Activated CD4-positive, alpha-beta memory T cell treated with anti-CD3 and anti-CD28 coated beads for 36 hours (primary cell): ENCODE measurements at regions of chr6 and their contacts with region 1.

Region 1: DNA sequence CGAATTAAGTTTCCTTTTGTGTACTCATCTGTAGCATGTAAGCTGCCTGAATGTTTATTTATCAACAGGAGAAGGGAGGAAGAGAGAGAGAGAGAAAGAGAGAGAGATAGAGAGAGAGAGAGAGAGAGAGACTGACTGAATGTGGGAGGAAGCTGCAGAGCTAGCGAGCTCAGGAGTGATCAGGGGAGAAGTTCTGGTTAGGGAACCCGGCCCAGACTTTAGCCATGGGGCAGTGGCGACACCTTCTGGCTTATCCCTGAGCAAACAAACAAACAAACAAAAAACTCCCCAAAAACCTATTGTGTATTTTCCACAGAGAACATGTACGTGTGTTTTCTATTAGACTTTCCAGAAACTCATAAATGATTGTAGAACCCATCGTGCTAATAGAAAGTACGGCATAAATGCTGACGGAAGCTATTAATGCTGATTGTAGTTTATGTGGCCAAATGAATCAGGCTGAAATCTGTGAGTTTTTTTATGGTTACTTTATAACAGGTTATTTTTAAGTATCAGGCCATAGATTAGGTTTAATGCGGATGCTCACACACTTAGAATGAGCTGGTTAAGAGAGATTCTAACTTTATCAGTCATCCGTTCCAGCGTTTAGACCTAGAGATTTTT is 92.8 kb downstream of the CLIC5 start:
- DNase-seq: peak; percentile 83
- H3K4me3 Mint-ChIP-seq: peak overlapping the region; percentile 67
- H3K27ac Mint-ChIP-seq: peak overlapping the region; percentile 97
- H3K4me1 Mint-ChIP-seq: peaks cover 52% of the 10 kb centered on the region
- H3K27me3 Mint-ChIP-seq: no peaks in the 10 kb centered on the region

Region 2: DNA sequence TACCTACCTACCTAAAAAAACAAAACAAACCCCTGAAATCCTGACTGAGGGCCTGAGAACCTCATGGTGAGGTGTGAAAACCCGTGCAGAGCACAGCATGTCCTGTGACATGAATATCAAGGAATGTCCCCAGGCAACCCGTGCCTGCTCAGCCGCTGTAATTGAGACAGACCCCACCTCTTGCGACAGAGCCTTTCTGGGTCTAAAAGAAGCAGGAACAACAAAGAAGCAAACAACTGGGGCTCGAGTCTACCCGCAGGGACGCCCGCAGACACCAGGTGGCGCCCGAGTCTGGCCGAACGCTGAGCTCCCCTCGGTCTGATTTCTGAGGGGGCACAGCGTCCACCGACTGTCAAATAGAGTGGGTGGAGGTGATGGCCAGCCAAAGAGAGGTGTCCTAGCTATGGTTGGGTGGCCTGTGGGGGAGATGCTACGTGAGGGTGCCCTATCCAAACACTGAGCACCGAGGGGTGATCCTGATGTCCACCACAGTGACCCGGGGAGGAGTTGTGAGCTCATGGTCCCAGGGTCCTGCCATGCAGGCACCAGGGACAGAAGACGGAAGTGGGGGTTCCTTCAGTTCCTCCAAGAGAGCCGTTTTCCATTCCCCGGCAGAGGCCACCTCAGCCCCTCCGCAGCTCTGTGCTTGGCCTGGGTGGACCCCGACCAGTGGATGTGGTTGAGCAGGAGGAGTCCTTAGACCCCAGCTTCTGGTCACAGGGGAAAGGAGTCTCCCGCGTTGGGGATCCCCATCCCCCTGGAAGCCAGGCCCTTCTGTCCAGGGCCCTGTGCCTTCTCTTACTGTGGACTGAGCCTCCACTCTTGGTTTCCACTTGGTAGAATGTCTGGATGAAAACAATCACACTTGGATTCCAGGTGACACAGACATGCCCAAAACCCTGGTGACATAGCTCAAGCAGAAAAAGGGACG is 1267.2 kb before region 1 on chr6:
- CTCF ChIA-PET with region 1: interaction called, 31 read pairs
- POLR2A ChIA-PET with region 1: no interaction called
- intact Hi-C with region 1: loop called (anchors 1 kb)
- DNase-seq: peak; percentile 85
- H3K4me3 Mint-ChIP-seq: peak overlapping the region; percentile 24
- H3K27ac Mint-ChIP-seq: peak overlapping the region; percentile 76
- H3K4me1 Mint-ChIP-seq: peaks cover 9% of the 10 kb centered on the region
- H3K27me3 Mint-ChIP-seq: no peaks in the 10 kb centered on the region

Region 3: DNA sequence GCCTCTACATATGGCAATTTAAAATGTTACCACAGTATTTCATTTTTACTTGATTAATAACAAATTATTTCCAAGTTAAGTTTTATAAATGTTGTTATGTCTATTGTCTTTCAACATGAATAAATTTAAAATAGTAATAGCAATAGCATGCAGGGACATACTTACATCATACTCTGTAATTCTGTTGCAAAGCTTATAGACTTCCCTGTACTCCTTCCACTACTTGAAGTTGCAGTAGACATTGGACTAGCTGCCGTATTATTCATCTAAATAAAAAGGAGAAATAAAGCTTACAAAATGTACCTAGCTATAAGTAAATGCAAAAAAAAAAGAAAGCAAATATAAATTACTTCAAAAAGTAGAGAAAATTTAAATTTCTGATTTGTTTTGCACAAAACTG is 557.8 kb before region 1 on chr6:
- CTCF ChIA-PET with region 1: no interaction called
- POLR2A ChIA-PET with region 1: no interaction called
- intact Hi-C with region 1: no loop called
- DNase-seq: no peak
- H3K4me3 Mint-ChIP-seq: no peak overlapping the region
- H3K27ac Mint-ChIP-seq: no peak overlapping the region
- H3K4me1 Mint-ChIP-seq: peaks cover 5% of the 10 kb centered on the region
- H3K27me3 Mint-ChIP-seq: no peaks in the 10 kb centered on the region

Region 4: DNA sequence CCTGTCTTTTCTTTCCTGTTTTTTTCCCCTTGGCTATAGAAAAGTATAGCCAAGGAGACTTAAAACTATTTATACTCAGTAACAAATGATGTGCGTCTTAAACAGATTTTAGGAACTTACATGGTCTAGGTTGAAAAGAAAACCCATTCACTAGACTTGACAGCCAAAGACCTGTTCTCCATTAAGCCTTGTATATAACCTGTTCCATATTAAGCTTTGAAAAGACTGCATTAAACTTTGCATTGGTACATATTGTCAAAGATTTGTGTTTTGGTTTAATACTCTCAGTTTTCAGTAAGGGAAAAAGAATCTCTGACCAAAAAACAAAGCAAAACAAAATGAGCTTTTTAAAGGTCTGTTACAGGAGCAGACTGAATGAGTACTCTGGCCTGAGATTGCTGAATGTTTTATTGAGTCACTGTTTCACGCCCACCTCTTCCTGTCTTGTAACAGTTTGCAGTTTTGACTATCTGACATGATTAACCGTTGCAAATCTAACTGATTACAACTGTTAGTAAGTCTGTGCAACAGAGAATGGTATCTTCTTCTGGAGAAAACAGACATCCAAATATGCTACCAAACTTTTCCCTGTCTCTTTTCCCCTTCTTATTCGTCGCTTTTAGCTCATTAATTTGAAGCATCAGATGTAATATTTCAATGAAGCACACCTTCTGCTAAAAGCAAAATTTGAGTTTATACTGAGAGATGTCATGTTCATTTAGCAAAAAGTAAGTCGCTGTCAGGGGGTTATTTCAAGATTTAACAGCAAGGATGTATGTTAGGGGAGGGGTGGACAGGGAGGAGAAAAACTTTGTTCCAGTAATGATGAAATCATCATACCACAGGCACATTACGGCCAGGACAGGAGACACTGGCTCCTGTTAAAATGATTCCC is 486.0 kb before region 1 on chr6:
- CTCF ChIA-PET with region 1: interaction called, 11 read pairs
- POLR2A ChIA-PET with region 1: no interaction called
- intact Hi-C with region 1: loop called (anchors 5 kb)
- DNase-seq: peak; percentile 67
- H3K4me3 Mint-ChIP-seq: peak overlapping the region; percentile 65
- H3K27ac Mint-ChIP-seq: peak overlapping the region; percentile 92
- H3K4me1 Mint-ChIP-seq: peaks cover 85% of the 10 kb centered on the region
- H3K27me3 Mint-ChIP-seq: no peaks in the 10 kb centered on the region

Region 5: GRCh38 chr6:45626087-45626891 is 296.6 kb before region 1 on chr6:
- CTCF ChIA-PET with region 1: no interaction called
- POLR2A ChIA-PET with region 1: no interaction called
- intact Hi-C with region 1: loop called (anchors 1 kb)
- DNase-seq: peak; percentile 65
- H3K4me3 Mint-ChIP-seq: no peak overlapping the region
- H3K27ac Mint-ChIP-seq: peak overlapping the region; percentile 80
- H3K4me1 Mint-ChIP-seq: peaks cover 48% of the 10 kb centered on the region
- H3K27me3 Mint-ChIP-seq: no peaks in the 10 kb centered on the region

Region 6: DNA sequence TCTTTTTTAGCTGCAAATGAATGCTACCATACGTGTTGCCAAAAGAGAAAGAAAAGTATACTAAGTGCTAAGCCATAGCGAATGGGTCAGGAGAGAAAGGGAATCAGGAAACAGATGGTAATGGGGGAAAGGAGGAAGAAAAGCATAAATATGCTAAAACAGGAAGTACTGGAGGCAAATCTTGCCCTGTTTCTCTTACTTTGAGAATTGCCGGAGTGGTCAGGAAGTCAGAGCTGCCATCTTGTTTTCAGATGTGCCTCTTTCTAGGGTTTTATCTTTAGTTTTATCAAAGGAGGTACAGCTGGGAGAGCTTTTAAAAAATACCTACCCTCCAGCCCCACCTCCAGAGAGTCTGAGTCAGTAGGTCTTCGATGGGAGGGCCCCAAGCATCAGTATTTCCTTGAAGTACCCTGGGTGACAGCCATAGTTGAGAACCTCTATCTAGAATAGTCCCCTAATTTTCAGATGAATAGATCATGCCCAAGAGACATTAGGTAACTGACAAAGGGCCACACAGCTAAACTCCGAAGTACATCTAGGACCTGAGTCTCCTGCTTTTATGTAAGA is 100.5 kb before region 1 on chr6:
- CTCF ChIA-PET with region 1: interaction called, 5 read pairs
- POLR2A ChIA-PET with region 1: interaction called, 6 read pairs
- intact Hi-C with region 1: loop called (anchors 1 kb)
- DNase-seq: peak; percentile 67
- H3K4me3 Mint-ChIP-seq: peak overlapping the region; percentile 47
- H3K27ac Mint-ChIP-seq: peak overlapping the region; percentile 89
- H3K4me1 Mint-ChIP-seq: peaks cover 50% of the 10 kb centered on the region
- H3K27me3 Mint-ChIP-seq: peaks cover 3% of the 10 kb centered on the region

Region 7: DNA sequence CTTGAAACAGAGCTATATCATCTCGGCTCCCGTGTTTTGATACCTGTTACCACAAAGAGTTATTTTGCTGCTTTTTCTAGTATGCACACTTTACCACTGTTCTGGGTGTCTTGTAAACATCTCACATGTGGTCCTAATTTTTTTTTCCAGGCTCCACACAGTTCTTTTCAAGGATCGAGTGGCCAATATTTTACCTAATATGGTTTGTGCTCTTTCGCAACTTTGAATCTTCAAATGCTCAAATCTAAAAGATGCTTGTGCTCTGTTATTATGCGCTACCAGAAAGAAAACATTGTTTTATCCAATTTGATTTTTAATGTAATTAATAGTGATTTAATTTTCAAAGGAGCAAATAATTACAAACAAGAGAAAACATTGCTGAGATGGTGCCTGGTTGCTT is 237.3 kb after region 1 on chr6:
- CTCF ChIA-PET with region 1: no interaction called
- POLR2A ChIA-PET with region 1: no interaction called
- intact Hi-C with region 1: no loop called
- DNase-seq: no peak
- H3K4me3 Mint-ChIP-seq: no peak overlapping the region
- H3K27ac Mint-ChIP-seq: no peak overlapping the region
- H3K4me1 Mint-ChIP-seq: no peaks in the 10 kb centered on the region
- H3K27me3 Mint-ChIP-seq: peaks cover 18% of the 10 kb centered on the region

Region 8: GRCh38 chr6:46325561-46326530 is 403.0 kb after region 1 on chr6:
- CTCF ChIA-PET with region 1: no interaction called
- POLR2A ChIA-PET with region 1: no interaction called
- intact Hi-C with region 1: no loop called
- DNase-seq: peak; percentile 51
- H3K4me3 Mint-ChIP-seq: peak overlapping the region; percentile 17
- H3K27ac Mint-ChIP-seq: peak overlapping the region; percentile 31
- H3K4me1 Mint-ChIP-seq: peaks cover 17% of the 10 kb centered on the region
- H3K27me3 Mint-ChIP-seq: peaks cover 12% of the 10 kb centered on the region

Region 9: DNA sequence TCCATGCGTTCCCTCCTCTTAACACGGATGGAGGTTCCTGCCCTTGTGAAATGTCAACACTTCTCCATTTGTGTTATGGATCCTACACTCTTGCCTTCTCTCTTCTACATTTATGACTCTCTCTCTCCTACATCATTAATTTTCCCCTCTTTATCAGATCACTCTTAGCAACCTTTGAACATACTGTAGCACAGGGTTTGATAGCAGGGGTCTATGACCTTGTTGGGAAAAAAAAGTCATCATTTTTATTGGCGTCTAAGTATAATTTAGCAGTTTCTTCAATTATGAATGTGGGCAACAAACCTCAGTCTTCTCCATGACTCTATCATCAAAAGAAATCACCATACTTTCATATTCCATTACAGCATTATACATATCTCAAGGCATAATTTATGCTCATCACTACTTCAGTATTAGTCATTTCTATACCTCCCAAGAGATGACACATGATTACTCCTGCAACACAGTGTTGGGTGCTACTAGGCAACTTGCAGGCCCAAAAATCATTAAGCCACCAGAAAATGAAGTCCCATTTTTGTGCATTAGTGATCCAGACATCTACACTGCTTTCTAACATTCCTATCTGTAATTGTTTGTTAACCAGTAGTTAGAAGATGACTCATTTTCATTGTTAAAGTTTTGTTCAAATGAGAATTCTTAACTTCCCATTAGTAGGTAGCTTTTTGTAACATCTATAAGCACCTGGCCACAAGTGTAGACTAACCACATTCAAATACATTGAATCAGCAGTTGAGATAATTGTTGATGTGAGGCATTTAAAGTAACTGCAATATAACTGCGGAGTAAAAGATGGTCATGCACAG is 720.3 kb after region 1 on chr6:
- CTCF ChIA-PET with region 1: no interaction called
- POLR2A ChIA-PET with region 1: no interaction called
- intact Hi-C with region 1: loop called (anchors 1 kb)
- DNase-seq: no peak
- H3K4me3 Mint-ChIP-seq: no peak overlapping the region
- H3K27ac Mint-ChIP-seq: no peak overlapping the region
- H3K4me1 Mint-ChIP-seq: peaks cover 11% of the 10 kb centered on the region
- H3K27me3 Mint-ChIP-seq: peaks cover 14% of the 10 kb centered on the region